Breast epithelium (tissue), 4 donors: ENCODE measurements at regions of chr20 and their contacts with region 1.

Region 1: DNA sequence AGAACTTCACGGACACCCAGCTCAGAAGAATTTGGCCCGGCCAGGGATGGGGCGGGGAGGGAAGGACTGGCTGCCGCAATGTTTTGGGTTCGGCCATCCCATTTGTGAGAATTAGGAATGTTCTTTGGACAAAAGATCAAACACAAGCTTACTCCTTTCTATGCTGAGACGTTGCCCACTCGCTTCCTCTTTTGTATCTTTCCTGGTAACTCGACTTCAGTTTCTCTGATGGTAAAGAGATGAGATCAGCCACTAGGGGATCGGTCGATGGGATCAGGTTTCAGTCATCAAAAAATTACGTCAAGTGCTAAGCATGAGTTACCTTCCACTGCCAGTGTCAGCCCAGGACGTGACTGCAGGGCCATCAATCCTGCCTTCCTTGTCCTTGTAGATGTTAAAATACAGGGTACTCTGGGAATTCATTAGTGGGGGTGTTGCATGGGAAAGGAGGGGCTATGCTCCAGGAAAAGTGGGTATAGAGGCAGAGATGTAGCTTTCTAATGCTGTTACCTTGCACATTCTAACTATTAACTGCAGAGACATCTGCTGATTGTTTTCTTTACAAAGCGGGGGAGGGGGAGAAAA is 190.2 kb downstream of the TSHZ2 start:
- DNase-seq: peak in 1 of 2 donors; percentile 64
- H3K4me3 ChIP-seq: peak overlapping the region; percentile 16 to 53 (median 32)
- H3K27ac ChIP-seq: peak overlapping the region; percentile 81 to 85
- H3K4me1 ChIP-seq: no peaks in the 10 kb centered on the region
- H3K27me3 ChIP-seq: no peaks in the 10 kb centered on the region
- CTCF ChIP-seq: peak; percentile 42 to 70 (median 51)
- POLR2A ChIP-seq: no peak

Region 2: DNA sequence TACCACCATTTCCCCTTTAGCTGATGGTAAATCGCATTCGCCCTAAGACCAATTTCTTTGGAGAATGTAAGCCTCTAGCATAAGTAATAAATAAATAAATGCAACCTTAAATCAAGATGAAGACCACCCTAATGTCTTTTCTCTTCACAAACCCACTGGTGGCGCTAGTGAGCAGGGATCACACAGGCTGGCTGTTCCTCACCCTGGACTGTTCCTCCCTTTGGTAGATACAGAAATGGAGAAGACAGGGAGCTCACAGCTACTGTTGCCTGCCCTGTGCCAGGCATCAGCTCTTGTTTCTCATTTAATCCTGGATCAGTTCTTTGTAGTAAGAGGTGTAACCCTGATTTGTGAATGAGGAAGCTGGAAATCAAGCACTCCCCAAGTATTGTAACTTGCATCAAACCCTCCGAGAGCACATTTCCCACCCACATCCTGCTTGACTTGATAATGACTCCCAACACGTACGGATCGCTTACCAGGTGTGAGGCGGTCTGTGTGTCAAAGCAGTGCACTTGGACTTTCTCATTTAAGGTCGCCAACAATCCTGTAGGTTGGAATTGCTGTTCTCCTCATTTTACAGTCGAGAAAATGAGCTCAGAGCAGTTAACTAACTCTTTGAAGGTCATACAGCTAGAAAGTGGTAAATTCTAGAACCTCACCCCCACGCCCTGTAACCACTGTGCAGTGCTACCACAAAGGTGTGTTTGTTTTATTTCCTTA is 45.9 kb after region 1 on chr20:
- intact Hi-C with region 1: no loop called
- DNase-seq: no peak
- H3K4me3 ChIP-seq: no peak overlapping the region
- H3K27ac ChIP-seq: no peak overlapping the region
- H3K4me1 ChIP-seq: no peaks in the 10 kb centered on the region
- H3K27me3 ChIP-seq: no peaks in the 10 kb centered on the region
- CTCF ChIP-seq: no peak
- POLR2A ChIP-seq: no peak

Region 3: DNA sequence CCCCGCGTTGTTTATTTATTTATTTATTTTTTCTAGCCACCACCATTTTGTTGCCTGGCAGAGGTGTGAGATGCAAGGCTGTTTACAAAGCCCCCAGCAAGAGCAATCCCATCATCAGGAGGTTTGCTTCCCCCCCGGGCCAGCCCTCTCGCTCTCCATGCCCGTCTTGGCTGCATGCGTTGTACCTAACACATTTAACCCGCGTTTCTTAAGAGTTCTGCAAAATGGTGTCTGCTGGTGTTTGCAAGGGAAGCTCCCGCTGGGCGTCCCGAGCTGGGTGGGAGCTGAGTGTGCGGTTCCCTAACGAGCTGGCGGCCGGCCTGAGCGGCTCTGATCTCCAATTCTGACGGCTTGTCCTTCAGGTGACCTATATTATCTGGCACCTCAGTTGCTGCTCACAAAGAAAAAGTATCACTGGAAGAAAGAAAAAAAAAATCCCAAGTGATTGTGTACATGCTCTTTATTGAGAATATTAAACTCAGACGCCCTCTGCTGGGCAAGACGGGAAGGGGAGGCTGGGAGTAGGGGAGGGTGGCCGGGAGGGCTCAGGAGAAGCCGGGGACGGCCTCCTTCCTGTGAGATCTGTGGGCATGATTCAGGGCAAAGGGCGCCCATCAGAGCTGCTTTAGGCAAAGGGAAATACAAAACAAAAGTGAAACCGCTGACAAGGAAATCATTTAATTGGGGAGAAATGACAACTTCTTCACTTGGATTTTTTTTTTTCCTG is 753.3 kb after region 1 on chr20:
- intact Hi-C with region 1: loop called (anchors 10 kb)
- DNase-seq: peak; percentile 93 to 95
- H3K4me3 ChIP-seq: peak overlapping the region; percentile 53 to 71 (median 56)
- H3K27ac ChIP-seq: peak overlapping the region; percentile 83 to 84
- H3K4me1 ChIP-seq: peaks cover 0 to 11% of the 10 kb centered on the region in 2 donors
- H3K27me3 ChIP-seq: no peaks in the 10 kb centered on the region
- CTCF ChIP-seq: peak; percentile 91 to 98 (median 95)
- POLR2A ChIP-seq: no peak